Activated B cell treated with CpG ODN at 0.5 μM for 24 hours (primary cell): ENCODE measurements at regions of chr15 and their contacts with region 1.

Region 1: DNA sequence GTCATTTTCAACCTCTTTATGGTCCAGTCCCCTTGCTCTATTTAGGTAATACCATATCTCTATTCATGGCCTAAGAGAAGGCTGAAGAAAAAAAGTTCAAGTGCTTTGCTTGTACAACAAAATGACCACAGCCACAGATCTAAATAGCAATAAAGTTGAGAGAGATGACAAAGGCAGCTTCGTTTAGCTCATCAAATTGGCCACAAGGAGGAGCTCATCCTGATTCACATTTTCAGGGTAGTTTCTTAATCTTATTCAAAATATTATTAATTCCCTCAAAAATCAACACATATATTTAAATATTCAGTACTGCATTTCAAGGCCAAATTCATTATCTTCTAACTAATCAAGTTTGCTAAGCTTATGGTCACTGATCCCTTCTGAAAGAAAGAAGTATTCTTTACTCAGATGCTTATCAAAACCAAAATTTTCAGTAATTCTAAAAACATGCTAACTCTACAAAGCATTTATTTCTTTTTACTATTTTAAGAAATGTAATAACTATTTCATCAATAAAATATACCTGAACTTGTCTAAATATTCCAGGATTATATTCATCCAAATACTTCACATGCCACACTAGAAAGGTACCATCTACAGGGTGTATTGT is 85.5 kb downstream of the DMXL2 start:
- DNase-seq: no peak
- ATAC-seq: no peak
- H3K4me3 Mint-ChIP-seq: no peak overlapping the region
- H3K27ac Mint-ChIP-seq: no peak overlapping the region
- H3K4me1 Mint-ChIP-seq: no peaks in the 10 kb centered on the region
- H3K27me3 Mint-ChIP-seq: no peaks in the 10 kb centered on the region
- CTCF ChIP-seq: no peak

Region 2: DNA sequence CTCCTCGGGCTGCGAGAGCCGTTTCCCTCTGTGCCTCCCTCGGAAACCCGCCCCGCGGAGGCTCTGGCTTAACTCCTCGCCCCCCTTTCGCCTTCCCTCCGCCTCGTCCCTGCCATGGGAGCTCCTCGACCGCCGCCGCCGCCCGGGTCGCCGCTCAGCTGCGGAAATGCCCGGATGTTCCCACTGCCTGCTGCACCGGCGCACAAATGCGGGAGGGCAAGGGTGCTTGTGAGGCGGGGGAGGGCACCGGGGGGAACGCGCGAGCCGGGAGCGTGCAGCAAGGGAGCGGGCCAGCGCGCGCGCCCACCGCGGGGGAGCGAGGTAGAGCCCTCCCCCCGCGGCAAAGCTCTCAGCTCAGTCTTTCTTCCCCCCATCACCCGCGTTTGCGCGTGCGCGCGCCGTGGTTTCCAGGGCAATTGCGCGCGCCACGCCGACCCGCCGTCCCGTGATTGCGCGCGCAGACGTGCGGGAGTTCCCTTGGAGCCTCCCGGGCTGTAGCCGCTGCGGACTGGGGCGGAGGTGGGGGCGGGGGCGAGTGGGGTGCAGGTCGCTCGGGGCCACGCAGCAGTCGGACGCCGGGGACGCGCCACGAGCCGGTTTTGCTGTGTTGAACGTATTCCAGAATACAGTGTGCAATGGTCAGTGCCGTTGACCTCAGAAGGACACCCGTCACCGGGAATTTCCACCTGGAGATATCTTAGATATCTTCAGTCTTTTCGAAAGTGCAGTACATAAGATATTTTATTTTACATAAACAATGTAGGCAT is 85.7 kb after region 1 on chr15 and contains the start of gene DMXL2:
- CTCF ChIA-PET with region 1: interaction called, 12 read pairs
- POLR2A ChIA-PET with region 1: no interaction called
- intact Hi-C with region 1: loop called (anchors 2 kb)
- DNase-seq: peak; percentile 56
- ATAC-seq: peak; percentile 63
- H3K4me3 Mint-ChIP-seq: peak within 1 kb of the TSS; percentile 87
- H3K27ac Mint-ChIP-seq: peak within 1 kb of the TSS; percentile 41
- H3K4me1 Mint-ChIP-seq: peaks cover 38% of the 10 kb centered on the region
- H3K27me3 Mint-ChIP-seq: peaks cover 5% of the 10 kb centered on the region
- CTCF ChIP-seq: no peak
- total RNA-seq, gene DMXL2: 5.3 and 6.1 TPM in 2 replicates